B cell (primary cell): ENCODE measurements at regions of chr19 and their contacts with region 1.

Region 1: GRCh38 chr19:10085641-10086590 is at the start of gene SHFL:
- DNase-seq: peak; percentile 91
- ATAC-seq: peak; percentile 97
- H3K4me3 ChIP-seq: peak within 1 kb of the TSS; percentile 50 to 99 (median 96)
- H3K4me3 Mint-ChIP-seq: peak within 1 kb of the TSS; percentile 89
- H3K27ac ChIP-seq: peak within 1 kb of the TSS; percentile 70 to 80
- H3K27ac Mint-ChIP-seq: peak within 1 kb of the TSS; percentile 82
- H3K4me1 ChIP-seq: peaks cover 6 to 16% of the 10 kb centered on the region in 2 donors
- H3K4me1 Mint-ChIP-seq: peaks cover 16% of the 10 kb centered on the region
- H3K27me3 ChIP-seq: no peaks in the 10 kb centered on the region
- H3K27me3 Mint-ChIP-seq: no peaks in the 10 kb centered on the region
- CTCF ChIP-seq: no peak
- total RNA-seq, gene SHFL: 95.8 and 109 TPM in 2 replicates

Region 2: GRCh38 chr19:9958379-9958821 is 127.5 kb before region 1 on chr19:
- CTCF ChIA-PET with region 1: no interaction called
- POLR2A ChIA-PET with region 1: no interaction called
- intact Hi-C with region 1: no loop called
- DNase-seq: no peak
- ATAC-seq: no peak
- H3K4me3 ChIP-seq: no peak overlapping the region
- H3K4me3 Mint-ChIP-seq: no peak overlapping the region
- H3K27ac ChIP-seq: no peak overlapping the region
- H3K27ac Mint-ChIP-seq: no peak overlapping the region
- H3K4me1 ChIP-seq: no peaks in the 10 kb centered on the region
- H3K4me1 Mint-ChIP-seq: no peaks in the 10 kb centered on the region
- H3K27me3 ChIP-seq: peaks cover 0 to 7% (median 2%) of the 10 kb centered on the region in 4 experiments
- H3K27me3 Mint-ChIP-seq: peaks cover 18% of the 10 kb centered on the region
- CTCF ChIP-seq: no peak

Region 3: DNA sequence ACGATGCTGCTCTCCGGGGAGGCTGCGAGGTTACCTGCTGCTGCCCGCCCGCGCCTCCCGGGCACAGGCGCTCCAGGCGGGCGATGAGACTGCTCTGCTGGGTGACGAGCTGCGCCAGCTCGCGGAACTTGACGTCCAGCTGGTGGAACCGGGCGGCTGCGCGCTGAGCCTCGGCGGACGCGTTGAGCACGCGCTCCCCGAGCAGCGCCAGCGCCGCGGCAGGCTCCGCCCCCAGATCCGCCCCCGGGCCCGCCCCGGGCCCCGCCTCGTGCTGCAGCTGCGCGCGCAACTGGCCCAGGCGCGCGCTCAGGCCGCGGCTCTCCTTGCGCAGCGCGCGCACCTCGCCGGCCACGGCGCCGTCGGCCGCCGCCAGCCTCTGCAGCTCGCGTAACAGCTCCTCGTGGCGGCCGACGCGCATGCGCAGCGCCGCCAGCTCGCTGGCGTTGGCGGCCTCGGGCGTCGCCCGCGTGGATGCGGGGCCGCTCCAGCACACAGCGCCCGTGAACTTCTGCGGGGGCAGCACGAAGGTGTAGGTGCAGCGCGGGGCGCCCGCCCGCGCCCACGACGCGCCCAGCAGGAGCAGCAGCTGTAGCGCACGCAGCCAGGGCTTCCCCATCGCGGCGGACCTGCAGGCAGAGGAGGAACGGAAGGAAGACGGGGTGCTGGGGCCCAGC is 10.2 kb after region 1 on chr19:
- CTCF ChIA-PET with region 1: interaction called, 6 read pairs
- POLR2A ChIA-PET with region 1: interaction called, 12 read pairs
- intact Hi-C with region 1: loop called (anchors 1 kb)
- DNase-seq: peak; percentile 96
- ATAC-seq: peak; percentile 91
- H3K4me3 ChIP-seq: peak overlapping the region in 4 of 5 experiments; percentile 40 to 55 (median 50)
- H3K4me3 Mint-ChIP-seq: peak overlapping the region; percentile 69
- H3K27ac ChIP-seq: peak overlapping the region; percentile 62 to 74
- H3K27ac Mint-ChIP-seq: peak overlapping the region; percentile 67
- H3K4me1 ChIP-seq: peaks cover 27 to 49% of the 10 kb centered on the region in 2 donors
- H3K4me1 Mint-ChIP-seq: peaks cover 39% of the 10 kb centered on the region
- H3K27me3 ChIP-seq: no peaks in the 10 kb centered on the region
- H3K27me3 Mint-ChIP-seq: no peaks in the 10 kb centered on the region
- CTCF ChIP-seq: no peak

Region 4: GRCh38 chr19:10120538-10121189 is 34.7 kb after region 1 on chr19:
- CTCF ChIA-PET with region 1: interaction called, 3 read pairs
- POLR2A ChIA-PET with region 1: interaction called, 3 read pairs
- intact Hi-C with region 1: loop called (anchors 5 kb)
- DNase-seq: no peak
- ATAC-seq: no peak
- H3K4me3 ChIP-seq: no peak overlapping the region
- H3K4me3 Mint-ChIP-seq: peak overlapping the region; percentile 37
- H3K27ac ChIP-seq: no peak overlapping the region
- H3K27ac Mint-ChIP-seq: no peak overlapping the region
- H3K4me1 ChIP-seq: peaks cover 9 to 19% of the 10 kb centered on the region in 2 donors
- H3K4me1 Mint-ChIP-seq: peaks cover 31% of the 10 kb centered on the region
- H3K27me3 ChIP-seq: no peaks in the 10 kb centered on the region
- H3K27me3 Mint-ChIP-seq: no peaks in the 10 kb centered on the region
- CTCF ChIP-seq: no peak

Region 5: DNA sequence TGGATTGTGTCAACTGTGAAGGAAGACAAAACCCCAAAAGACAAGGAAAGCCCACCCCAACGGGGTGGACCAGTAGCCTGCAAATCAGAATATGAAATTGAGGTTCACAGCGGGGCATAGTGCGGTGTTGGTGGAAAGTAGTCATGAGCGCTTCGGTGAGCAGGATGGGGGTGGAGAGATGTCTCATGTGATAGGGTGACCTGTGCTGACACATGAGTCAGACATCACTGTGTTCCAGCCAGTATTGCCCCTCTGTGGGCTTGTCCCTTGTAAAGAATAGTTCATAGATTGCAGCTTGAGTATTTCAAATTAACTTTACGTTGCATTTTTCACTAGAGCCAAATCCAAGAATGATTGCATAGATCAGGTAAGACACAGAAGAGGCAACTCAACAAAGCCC is 1808.9 kb after region 1 on chr19:
- CTCF ChIA-PET with region 1: no interaction called
- POLR2A ChIA-PET with region 1: no interaction called
- intact Hi-C with region 1: no loop called
- DNase-seq: no peak
- ATAC-seq: no peak
- H3K4me3 ChIP-seq: no peak overlapping the region
- H3K4me3 Mint-ChIP-seq: no peak overlapping the region
- H3K27ac ChIP-seq: no peak overlapping the region
- H3K27ac Mint-ChIP-seq: no peak overlapping the region
- H3K4me1 ChIP-seq: no peaks in the 10 kb centered on the region
- H3K4me1 Mint-ChIP-seq: peaks cover under 1% of the 10 kb centered on the region
- H3K27me3 ChIP-seq: no peaks in the 10 kb centered on the region
- H3K27me3 Mint-ChIP-seq: no peaks in the 10 kb centered on the region
- CTCF ChIP-seq: no peak